GM10248 (cell line): ENCODE measurements at regions of chr10 and their contacts with region 1.

Region 1: GRCh38 chr10:88932539-88933256 is 19.9 kb downstream of the ACTA2 start:
- DNase-seq: peak; percentile 44
- CTCF ChIP-seq: peak; percentile 89

Region 2: DNA sequence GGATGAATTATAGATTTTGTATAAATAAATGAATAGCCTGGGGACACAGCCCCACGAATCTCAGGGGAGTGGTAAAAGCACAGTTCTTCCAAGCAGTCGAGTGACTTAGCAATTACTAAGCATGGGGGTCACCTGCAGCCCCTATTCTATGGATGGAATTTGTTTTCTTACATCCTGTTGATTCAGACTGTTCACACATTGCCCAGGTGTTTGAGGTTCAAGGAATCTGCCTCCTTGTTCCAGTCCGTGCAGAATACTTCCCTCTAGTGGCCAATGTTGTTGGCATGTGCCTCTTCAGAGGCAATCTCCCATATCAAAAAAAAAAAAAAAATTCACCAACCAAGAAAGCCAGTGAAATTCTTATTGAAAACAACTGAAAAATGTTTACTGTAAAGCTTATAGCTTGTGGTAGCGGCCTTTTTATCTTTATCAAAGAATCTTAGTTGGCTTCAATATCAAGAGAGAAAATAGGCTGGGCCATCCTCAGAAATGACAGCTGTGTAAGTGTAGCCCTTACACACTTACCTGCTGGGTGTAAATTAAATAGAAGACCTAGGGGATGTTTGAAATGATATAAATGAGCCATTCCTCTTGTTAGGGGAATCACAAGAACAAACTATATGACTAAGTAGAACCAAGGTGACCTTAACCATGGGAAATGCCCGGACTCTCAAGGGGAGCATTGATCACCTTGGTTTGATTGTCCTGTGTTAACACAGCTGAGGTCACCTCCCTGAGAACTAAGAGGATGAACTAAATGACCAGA is 122.3 kb before region 1 on chr10:
- CTCF ChIA-PET with region 1: interaction called, 11 read pairs
- POLR2A ChIA-PET with region 1: no interaction called
- DNase-seq: peak; percentile 35
- CTCF ChIP-seq: peak; percentile 62

Region 3: DNA sequence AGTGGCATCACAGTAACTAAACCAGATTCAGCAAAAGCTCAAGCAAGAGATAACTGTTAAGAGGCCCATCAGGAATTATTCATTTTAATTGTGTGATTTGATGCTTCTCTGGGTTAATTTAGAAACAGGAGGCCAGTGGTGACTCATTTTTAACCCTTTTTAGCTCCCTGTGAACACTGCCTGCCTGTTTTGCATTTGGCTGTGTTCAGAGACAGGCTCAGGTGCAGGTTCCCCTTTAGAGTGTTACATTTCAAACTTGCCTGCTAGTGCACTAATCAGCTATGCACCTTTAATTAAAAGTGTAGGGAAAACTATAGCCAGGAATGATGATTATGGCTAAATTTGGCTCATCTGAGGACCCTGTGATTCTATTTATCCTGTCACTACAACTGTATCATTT is 46.1 kb before region 1 on chr10:
- CTCF ChIA-PET with region 1: interaction called, 59 read pairs
- POLR2A ChIA-PET with region 1: no interaction called
- DNase-seq: peak; percentile 38
- CTCF ChIP-seq: no peak

Region 4: DNA sequence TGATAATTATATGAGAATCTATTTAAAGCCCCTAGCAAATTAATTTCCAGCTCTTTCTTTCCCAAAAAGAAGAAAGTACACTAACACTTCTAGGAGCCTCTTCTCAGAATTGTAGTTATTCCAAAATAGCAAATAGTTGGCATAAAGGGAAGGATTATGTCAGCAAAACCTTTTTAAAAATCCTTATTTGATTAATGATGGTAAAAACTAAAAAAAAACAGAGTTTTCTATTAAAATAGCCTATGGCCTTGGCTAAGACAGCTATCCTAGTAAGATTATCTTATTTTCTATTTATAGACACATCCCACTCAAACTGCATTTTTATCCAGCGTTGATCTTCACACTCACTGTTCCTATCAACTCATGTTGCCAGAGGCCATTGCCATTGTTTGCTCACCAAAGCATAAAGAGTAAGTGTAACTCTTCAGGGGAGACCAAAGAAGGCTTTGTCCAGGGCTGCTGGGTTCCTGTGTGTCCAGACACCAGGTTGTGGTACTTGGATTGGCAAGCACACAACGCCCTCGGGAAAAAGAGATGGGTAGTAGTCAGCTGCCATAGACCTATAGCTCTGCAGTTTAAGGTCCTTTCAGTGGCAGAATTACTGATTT is 11.6 kb before region 1 on chr10:
- CTCF ChIA-PET with region 1: interaction called, 38 read pairs
- POLR2A ChIA-PET with region 1: no interaction called
- DNase-seq: no peak
- CTCF ChIP-seq: no peak

Region 5: GRCh38 chr10:88990384-88991160 is 57.9 kb after region 1 on chr10 and contains the start of gene FAS:
- CTCF ChIA-PET with region 1: interaction called, 80 read pairs
- POLR2A ChIA-PET with region 1: no interaction called
- DNase-seq: peak; percentile 79
- CTCF ChIP-seq: no peak

Region 6: DNA sequence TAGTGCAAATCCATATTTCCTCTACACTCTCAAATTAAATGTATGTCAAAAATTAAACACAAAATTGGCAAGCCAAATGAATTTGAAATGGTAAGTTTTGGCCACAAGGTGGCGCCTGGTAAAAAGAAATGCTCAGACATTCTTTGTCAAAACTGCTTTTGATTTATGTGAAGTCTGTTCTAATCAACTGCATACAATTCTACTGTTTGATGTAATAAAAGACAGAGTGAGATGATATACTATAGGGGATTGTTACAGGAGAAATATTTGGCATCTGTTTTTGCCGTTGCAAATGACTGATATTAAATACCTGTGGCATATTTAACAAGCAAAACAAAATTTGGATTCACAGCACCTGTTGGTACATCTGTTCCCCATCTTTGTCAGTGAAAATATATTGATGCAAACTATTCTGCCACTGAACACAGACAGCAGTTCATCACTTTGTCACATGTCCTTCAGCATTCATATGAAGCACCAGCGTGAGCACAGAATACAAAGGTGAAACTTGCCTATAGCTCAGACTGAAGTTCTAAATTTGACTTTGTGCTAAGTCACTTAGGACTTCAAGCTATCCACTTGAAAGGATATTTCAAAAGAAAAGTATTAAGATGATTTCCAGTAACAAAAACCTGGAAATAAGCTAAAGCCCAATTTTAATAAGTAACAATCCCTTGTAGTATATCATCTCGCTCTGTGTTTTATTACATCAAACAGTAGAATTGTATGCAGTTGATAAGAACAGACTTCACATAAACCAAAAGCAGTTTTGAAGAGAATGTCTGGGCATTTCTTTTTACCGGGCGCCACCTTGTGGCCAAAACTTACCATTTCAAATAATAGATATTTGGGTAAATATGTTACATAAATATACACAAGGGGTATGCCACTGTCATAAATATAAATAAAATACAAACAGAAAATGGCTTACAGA is 284.6 kb after region 1 on chr10:
- CTCF ChIA-PET with region 1: interaction called, 83 read pairs
- POLR2A ChIA-PET with region 1: no interaction called
- DNase-seq: peak; percentile 42
- CTCF ChIP-seq: peak; percentile 61